ENCODE measurements at regions of chr2 and their contacts with region 1.

Region 1: DNA sequence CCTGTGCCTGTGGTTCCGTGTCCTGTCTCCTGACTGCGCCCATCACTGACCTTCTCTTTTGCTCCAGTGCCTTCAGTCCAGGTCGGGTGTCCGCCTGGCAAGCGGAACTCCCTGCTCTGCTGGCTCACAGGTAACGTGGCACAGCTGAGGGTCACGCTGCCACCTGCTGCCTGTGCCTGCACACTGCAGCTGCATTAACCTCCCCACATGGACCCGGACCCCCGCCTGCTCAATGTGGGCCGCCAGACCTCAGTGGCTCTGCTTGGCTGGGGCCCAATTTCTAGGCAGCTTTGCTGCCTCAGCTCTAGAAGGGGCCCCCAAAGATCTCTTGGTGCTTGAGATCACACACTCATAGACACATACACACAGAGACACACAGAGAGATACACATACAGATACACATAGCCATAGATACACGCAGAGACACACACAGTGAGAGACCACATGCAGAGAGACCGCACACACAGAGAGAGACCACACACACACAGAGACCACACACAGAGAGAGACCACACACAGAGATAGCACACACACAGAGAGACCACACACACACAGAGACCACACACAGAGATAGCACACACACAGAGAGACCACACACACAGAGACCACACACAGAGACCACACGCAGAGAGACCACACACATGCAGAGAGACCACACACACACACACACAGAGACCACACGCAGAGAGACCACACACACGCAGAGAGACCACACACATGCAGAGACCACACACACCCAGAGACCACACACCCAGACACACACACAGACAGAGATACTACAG is 14.9 kb upstream of the CNNM3 start:
- DNase-seq: peak; percentile 41
- ATAC-seq: peak; percentile 97
- H3K4me3 ChIP-seq: no peak overlapping the region
- H3K27ac ChIP-seq: no peak overlapping the region
- H3K4me1 ChIP-seq: no peaks in the 10 kb centered on the region
- H3K27me3 ChIP-seq: no peaks in the 10 kb centered on the region
- CTCF ChIP-seq: peak; percentile 66
- POLR2A ChIP-seq: no peak
- RAD21 ChIP-seq: peak; percentile 67

Region 2: GRCh38 chr2:96320728-96321622 is 480.2 kb before region 1 on chr2:
- CTCF ChIA-PET with region 1: no interaction called
- POLR2A ChIA-PET with region 1: no interaction called
- dilution Hi-C with region 1: no loop called
- in situ Hi-C with region 1: no loop called
- intact Hi-C with region 1: no loop called
- DNase-seq: no peak
- ATAC-seq: peak; percentile 68
- H3K4me3 ChIP-seq: peak overlapping the region; percentile 63
- H3K27ac ChIP-seq: no peak overlapping the region
- H3K4me1 ChIP-seq: peaks cover 2% of the 10 kb centered on the region
- H3K27me3 ChIP-seq: peaks cover 18% of the 10 kb centered on the region
- CTCF ChIP-seq: no peak
- POLR2A ChIP-seq: no peak
- RAD21 ChIP-seq: no peak

Region 3: GRCh38 chr2:96760036-96760985 is 40.9 kb before region 1 on chr2 and contains the start of gene CNNM4:
- CTCF ChIA-PET with region 1: no interaction called
- POLR2A ChIA-PET with region 1: no interaction called
- dilution Hi-C with region 1: no loop called
- in situ Hi-C with region 1: no loop called
- intact Hi-C with region 1: loop called (anchors 5 kb)
- DNase-seq: peak; percentile 86
- ATAC-seq: peak; percentile 98
- H3K4me3 ChIP-seq: peak within 1 kb of the TSS; percentile 97
- H3K27ac ChIP-seq: peak within 1 kb of the TSS; percentile 79
- H3K4me1 ChIP-seq: peaks cover 20% of the 10 kb centered on the region
- H3K27me3 ChIP-seq: no peaks in the 10 kb centered on the region
- CTCF ChIP-seq: no peak
- POLR2A ChIP-seq: peak; percentile 80
- RAD21 ChIP-seq: no peak
- total RNA-seq, gene CNNM4: 1.4 and 2.0 TPM in 2 replicates

Measured in IMR-90 (cell line).